ENCODE measurements at regions of chr6 and their contacts with region 1.

Region 1: DNA sequence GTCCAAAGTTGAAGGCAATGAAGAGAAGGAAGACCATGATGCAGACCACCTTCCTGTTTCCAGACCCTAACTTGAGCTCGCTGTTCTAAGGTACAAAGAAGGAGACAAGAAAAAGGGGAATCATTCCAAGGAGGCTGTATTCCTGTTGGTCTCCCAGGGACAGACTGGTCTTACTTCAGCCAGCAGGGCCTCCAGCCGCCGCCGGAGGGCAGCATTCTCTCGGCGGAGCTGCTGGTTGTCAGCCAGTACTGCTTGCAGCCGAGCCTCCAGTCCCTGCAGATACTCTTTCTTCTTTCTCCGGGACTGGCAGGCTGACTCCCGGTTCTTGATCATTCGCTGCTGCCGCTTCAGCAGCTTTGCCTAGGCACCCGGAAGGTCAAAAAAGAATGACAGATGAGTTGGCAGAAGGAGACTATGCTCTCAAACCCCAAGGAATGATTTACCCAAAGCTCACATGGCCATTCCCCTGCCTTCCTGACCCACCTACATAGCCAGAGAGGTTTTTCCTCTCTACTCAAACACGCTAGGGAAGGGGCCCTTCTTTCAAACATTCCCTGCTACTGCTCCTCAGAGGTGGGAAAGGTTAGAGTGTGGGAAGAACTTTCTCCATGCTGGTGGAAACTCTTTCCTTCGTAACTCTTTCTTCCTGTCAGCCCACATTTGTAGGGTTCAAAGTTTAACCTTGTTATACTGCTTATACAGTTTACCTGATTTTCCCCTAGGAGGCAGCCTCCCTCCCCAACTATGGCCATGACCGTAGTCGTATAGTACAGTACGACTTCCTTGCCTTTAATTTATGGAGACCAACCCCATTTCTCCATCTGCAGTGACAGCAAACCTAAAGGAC is 9.0 kb downstream of the ATF6B start:
- DNase-seq: peak; percentile 96
- H3K4me3 Mint-ChIP-seq: no peak overlapping the region
- H3K27ac Mint-ChIP-seq: no peak overlapping the region
- H3K4me1 Mint-ChIP-seq: peaks cover 13% of the 10 kb centered on the region
- H3K27me3 Mint-ChIP-seq: no peaks in the 10 kb centered on the region
- CTCF ChIP-seq: peak; percentile 96

Region 2: DNA sequence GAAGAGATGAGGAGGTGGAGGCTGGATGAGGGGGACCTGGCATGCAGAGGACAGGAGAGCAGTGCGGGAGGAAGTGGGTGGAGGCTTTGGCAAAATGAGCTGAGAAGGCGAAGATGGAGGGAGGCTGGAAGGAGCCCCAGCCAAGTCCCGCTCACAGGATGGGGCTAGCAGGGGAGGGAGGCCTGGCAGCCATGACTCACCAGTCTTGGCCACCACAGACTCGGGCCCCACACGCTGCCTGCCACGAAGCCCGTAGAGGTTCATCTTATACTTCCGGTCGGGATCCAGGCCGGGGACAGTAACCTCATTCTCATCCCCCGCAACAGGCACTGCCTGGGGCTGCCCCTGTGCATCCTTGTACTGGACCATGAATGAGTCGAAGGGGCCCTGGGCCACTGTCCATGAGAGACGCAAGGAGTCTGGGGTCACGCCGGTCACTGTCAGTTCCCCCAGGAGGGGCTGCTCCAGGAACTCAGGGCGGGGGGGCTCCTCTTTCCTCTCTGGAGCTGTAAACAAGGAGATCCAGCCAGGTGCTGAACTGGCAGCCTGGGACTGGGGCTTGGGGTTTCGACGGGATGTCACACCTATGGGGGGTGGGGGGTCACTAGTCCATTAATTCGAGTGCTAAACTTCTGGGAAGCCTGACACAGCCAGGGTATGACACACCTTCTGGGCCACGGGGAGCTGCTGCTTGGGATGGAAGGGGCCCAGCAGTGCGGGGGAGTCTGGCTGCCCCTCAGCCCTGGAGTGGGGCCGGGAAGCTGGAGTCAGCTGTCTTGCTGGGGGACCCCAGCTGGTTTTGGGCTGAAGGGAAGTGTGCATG is 37.6 kb before region 1 on chr6:
- CTCF ChIA-PET with region 1: no interaction called
- intact Hi-C with region 1: no loop called
- DNase-seq: no peak
- H3K4me3 Mint-ChIP-seq: no peak overlapping the region
- H3K27ac Mint-ChIP-seq: no peak overlapping the region
- H3K4me1 Mint-ChIP-seq: peaks cover 2% of the 10 kb centered on the region
- H3K27me3 Mint-ChIP-seq: peaks cover 64% of the 10 kb centered on the region
- CTCF ChIP-seq: no peak

Region 3: GRCh38 chr6:32153564-32154513 is 34.8 kb after region 1 on chr6 and contains the start of gene PPT2:
- CTCF ChIA-PET with region 1: interaction called, 12 read pairs
- intact Hi-C with region 1: loop called (anchors 1 kb)
- DNase-seq: peak; percentile 87
- H3K4me3 Mint-ChIP-seq: peak within 1 kb of the TSS; percentile 94
- H3K27ac Mint-ChIP-seq: peak within 1 kb of the TSS; percentile 52
- H3K4me1 Mint-ChIP-seq: peaks cover 22% of the 10 kb centered on the region
- H3K27me3 Mint-ChIP-seq: no peaks in the 10 kb centered on the region
- CTCF ChIP-seq: no peak
- total RNA-seq, gene PPT2: 29.1 and 31.0 TPM in 2 replicates

Region 4: DNA sequence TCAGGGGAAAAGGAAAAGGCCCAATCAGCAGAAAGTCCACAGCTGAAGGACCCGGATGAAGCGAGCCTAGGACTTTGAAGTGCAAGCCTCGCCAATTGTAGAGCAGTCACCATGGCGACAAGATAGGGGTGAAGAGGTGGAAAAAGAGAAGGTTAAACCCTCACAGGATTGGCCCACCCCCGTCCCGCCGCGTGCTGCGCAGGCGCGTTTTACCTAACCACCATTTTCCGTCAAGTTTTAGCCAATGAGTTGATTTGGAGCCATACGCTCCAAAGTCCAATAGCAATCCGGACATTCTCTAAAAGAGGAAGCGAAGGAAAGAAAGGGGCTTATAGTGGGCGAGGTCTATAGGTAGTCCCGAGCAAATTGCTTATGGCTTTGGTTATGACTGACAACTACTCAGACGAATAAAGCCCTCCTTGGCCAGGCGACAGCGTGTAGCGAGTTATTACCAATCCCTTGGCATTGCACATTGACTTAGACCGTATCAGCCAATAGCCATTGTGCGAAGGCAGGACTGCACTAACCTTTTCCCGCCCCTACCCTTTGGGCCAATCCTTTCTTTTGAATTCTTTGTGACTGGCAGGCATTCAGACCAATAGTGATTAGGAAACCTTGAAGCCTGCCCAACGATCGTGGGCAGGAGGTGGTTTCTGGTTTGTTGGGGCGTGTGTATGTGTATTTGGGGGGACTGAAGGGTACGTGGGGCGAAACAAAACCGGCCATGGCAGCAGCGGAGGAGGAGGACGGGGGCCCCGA is 59.0 kb after region 1 on chr6 and contains the start of gene RNF5:
- CTCF ChIA-PET with region 1: interaction called, 6 read pairs
- intact Hi-C with region 1: loop called (anchors 2 kb)
- DNase-seq: peak; percentile 99
- H3K4me3 Mint-ChIP-seq: peak within 1 kb of the TSS; percentile 82
- H3K27ac Mint-ChIP-seq: peak within 1 kb of the TSS; percentile 62
- H3K4me1 Mint-ChIP-seq: peaks cover 43% of the 10 kb centered on the region
- H3K27me3 Mint-ChIP-seq: no peaks in the 10 kb centered on the region
- CTCF ChIP-seq: no peak
- total RNA-seq, gene RNF5: 85.4 and 89.6 TPM in 2 replicates

Region 5: GRCh38 chr6:32234934-32235333 is 115.9 kb after region 1 on chr6:
- CTCF ChIA-PET with region 1: no interaction called
- intact Hi-C with region 1: loop called (anchors 10 kb)
- DNase-seq: no peak
- H3K4me3 Mint-ChIP-seq: no peak overlapping the region
- H3K27ac Mint-ChIP-seq: no peak overlapping the region
- H3K4me1 Mint-ChIP-seq: no peaks in the 10 kb centered on the region
- H3K27me3 Mint-ChIP-seq: peaks cover 3% of the 10 kb centered on the region
- CTCF ChIP-seq: no peak

Measured in Calu3 (cell line).